CD8-positive, alpha-beta T cell (primary cell): ENCODE measurements at regions of chr22 and their contacts with region 1.

Region 1: DNA sequence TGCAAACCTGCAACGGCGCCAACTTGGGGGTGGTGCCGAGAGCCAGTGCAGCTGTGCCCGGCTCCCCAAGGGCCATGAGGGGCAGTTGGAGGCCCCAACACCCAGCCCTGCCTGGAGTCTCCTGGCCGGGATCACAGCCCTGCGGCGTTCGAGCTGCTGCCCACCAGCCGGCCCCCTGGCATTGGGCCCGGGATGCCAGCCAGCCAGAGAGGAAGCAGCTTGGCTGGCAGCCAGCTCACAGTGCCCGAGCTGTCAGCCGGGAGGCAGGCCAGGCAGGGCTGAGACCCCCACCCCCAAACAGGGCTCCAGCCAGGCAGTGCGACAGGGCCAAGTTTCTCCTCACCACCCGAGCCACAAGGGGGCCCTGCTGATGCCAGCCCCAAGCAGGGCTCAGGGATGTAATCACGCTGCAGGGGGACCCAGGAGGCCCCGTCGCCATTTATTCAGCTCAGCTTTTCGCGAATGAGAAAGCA is 26.0 kb upstream of the TCF20 start:
- DNase-seq: peak in 5 of 9 experiments; percentile 25 to 58 (median 41)
- ATAC-seq: peak; percentile 21
- H3K4me3 ChIP-seq: no peak overlapping the region
- H3K4me3 Mint-ChIP-seq: no peak overlapping the region
- H3K27ac ChIP-seq: no peak overlapping the region
- H3K27ac Mint-ChIP-seq: peak overlapping the region; percentile 77
- H3K4me1 ChIP-seq: peaks cover 68% of the 10 kb centered on the region
- H3K4me1 Mint-ChIP-seq: peaks cover 67% of the 10 kb centered on the region
- H3K27me3 ChIP-seq: no peaks in the 10 kb centered on the region
- H3K27me3 Mint-ChIP-seq: no peaks in the 10 kb centered on the region
- CTCF ChIP-seq: peak; percentile 24

Region 2: DNA sequence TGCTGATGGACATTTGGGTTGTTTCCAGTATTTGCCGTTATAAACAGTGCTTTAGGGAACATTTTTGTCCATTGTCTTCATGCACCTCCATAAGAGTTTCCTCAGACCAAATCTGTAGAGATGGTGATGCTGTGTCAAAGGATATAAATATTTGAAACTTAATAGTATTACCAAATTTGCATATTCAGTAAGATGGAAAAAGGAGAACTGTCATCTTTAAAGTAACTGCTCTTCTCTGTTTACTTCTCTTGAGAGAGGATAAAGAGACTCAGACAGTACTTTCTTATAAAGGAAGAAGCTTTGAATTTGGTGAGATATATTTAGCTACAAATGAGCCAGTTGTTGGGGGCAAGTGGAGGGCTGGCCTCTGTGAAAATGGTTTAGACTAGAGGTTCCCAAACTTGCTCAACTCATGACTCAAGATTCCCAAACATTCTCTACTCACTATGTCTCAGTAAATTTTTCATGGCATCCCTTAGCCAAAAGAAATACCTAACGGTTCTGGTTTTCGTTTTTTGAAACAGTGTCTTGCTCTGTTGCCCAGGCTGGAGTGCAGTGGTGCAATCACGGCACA is 407.7 kb before region 1 on chr22:
- CTCF ChIA-PET with region 1: no interaction called
- POLR2A ChIA-PET with region 1: no interaction called
- intact Hi-C with region 1: no loop called
- DNase-seq: no peak
- ATAC-seq: no peak
- H3K4me3 ChIP-seq: no peak overlapping the region
- H3K4me3 Mint-ChIP-seq: no peak overlapping the region
- H3K27ac ChIP-seq: no peak overlapping the region
- H3K27ac Mint-ChIP-seq: no peak overlapping the region
- H3K4me1 ChIP-seq: no peaks in the 10 kb centered on the region
- H3K4me1 Mint-ChIP-seq: no peaks in the 10 kb centered on the region
- H3K27me3 ChIP-seq: no peaks in the 10 kb centered on the region
- H3K27me3 Mint-ChIP-seq: no peaks in the 10 kb centered on the region
- CTCF ChIP-seq: no peak

Region 3: GRCh38 chr22:42313804-42314581 is 17.6 kb after region 1 on chr22:
- CTCF ChIA-PET with region 1: interaction called, 8 read pairs
- POLR2A ChIA-PET with region 1: interaction called, 4 read pairs
- intact Hi-C with region 1: loop called in 1 of 2 experiments (anchors 2 kb)
- DNase-seq: peak in 6 of 9 experiments; percentile 33 to 71 (median 44)
- ATAC-seq: peak; percentile 50
- H3K4me3 ChIP-seq: no peak overlapping the region
- H3K4me3 Mint-ChIP-seq: no peak overlapping the region
- H3K27ac ChIP-seq: peak overlapping the region in 1 of 2 experiments; percentile 50
- H3K27ac Mint-ChIP-seq: no peak overlapping the region
- H3K4me1 ChIP-seq: peaks cover 85% of the 10 kb centered on the region
- H3K4me1 Mint-ChIP-seq: peaks cover 45% of the 10 kb centered on the region
- H3K27me3 ChIP-seq: no peaks in the 10 kb centered on the region
- H3K27me3 Mint-ChIP-seq: no peaks in the 10 kb centered on the region
- CTCF ChIP-seq: peak; percentile 32